Adrenal gland (tissue), 19 donors: ENCODE measurements at regions of chr12 and their contacts with region 1.

Region 1: DNA sequence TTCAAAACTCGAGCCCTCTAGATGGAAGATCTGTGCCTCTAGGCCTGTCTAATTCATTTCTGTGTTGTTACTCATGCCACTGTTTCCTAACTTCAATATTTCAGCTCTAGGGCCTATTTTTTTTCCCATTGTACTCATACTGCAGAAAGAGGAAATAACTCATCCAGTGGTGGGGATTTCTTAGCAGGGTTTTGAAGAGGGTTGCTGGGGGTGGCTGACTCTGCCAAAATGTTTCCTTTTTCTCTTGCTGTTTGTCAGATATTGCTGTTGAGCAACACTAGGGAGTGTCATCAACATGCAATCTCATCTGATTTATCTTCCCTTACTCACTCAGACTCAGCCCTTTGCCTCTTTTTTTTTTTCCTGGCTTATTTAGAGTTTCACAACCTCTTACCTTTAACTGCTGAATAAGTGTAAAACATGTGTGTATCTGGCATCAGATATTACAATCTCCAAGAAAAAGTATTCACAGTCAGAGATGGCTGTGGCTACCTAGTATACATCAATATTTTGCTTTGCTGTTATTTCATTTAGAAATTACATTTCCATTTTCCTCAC is 189.5 kb downstream of the DUSP6 start:
- DNase-seq: peak; percentile 51 to 88 (median 75)
- H3K4me3 ChIP-seq: no peak overlapping the region
- H3K27ac ChIP-seq: peak overlapping the region in 3 of 5 donors; percentile 15 to 81 (median 36)
- H3K4me1 ChIP-seq: peaks cover 12 to 37% of the 10 kb centered on the region in 2 donors
- H3K27me3 ChIP-seq: no peaks in the 10 kb centered on the region
- CTCF ChIP-seq: no peak
- POLR2A ChIP-seq: no peak

Region 2: DNA sequence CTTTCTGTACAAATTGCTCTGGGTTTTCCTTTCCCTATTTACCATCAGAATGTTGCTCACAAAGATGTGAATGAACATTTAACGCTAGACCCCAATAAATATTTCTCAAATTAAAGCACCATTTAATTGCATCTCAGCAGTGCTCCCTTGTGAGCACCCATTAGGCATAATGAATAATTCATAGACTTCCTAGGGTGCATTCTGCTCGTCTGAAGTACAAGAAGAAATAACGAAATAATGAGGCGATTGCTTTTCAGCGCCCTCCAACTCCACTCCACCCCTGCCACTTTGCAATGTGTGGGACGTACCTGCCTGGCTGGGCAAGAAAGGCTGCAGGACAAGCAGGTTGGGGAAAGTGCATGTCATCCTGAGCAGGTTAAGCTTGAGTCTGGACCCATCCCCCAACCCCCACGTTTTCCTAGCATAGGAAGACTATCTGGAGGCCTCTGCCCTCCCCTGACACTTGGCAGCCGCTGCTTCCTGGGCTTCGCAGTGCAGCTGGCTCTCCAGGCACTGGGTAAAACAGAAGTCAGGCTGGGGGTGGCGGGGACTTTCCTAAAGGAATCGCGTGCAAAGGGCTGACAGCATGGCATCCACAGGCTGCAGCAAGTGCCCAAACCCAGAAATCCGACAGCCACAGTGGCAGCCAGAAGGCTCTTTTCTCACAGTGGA is 64.2 kb before region 1 on chr12:
- intact Hi-C with region 1: no loop called
- DNase-seq: no peak
- H3K4me3 ChIP-seq: no peak overlapping the region
- H3K27ac ChIP-seq: no peak overlapping the region
- H3K4me1 ChIP-seq: no peaks in the 10 kb centered on the region
- H3K27me3 ChIP-seq: no peaks in the 10 kb centered on the region
- CTCF ChIP-seq: no peak
- POLR2A ChIP-seq: no peak

Region 3: GRCh38 chr12:89345830-89346740 is 183.3 kb after region 1 on chr12:
- intact Hi-C with region 1: loop called in 1 of 2 experiments (anchors 10 kb)
- DNase-seq: peak; percentile 44 to 81 (median 55)
- H3K4me3 ChIP-seq: no peak overlapping the region
- H3K27ac ChIP-seq: peak overlapping the region in 2 of 5 donors; percentile 28 to 74
- H3K4me1 ChIP-seq: peaks cover 0 to 37% of the 10 kb centered on the region in 2 donors
- H3K27me3 ChIP-seq: no peaks in the 10 kb centered on the region
- CTCF ChIP-seq: no peak
- POLR2A ChIP-seq: peak in 1 of 2 donors; percentile 7